ENCODE measurements at regions of chr13 and their contacts with region 1.

Region 1: DNA sequence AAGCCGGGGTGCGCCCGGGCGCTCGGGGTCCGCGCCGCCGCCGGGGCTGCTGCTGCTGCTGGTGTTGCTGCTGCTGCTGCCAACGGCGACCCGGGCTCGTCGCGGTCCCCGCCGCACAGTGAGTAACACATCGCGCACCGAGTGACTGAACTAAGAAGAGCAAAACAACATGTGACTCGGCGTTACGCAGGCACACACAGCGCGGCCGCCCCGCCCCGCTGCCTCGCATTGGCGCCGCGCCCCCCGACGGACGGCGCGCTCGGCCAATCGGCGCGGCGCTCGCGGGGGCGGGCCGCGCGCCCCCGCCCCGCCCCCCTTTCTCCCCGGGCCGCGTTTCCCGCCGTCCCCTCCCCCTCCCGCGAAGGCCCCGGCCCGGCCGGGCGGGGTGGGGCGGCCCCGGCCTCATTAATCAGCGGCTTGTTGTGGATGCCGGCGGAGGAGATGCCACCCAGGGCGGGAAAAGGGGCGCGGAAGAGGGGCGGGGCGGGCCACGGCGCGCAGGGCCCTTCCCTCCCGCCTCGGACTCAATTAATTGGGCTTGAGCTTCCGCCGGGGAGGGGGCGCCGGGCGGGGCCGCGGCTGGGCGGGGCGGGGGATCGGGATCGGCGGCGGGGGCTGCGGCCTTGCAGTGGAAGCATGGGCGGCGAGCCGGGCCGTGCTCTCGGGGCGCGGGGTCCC is at the start of gene IRS2:
- DNase-seq: peak; percentile 86 to 97 (median 96)
- ATAC-seq: peak; percentile 89
- H3K4me3 ChIP-seq: peak within 1 kb of the TSS; percentile 53
- H3K4me3 Mint-ChIP-seq: peak within 1 kb of the TSS; percentile 74 to 92 (median 84)
- H3K27ac ChIP-seq: peak within 1 kb of the TSS; percentile 80
- H3K27ac Mint-ChIP-seq: peak within 1 kb of the TSS; percentile 74 to 95 (median 89)
- H3K4me1 ChIP-seq: peaks cover 0 to 6% of the 10 kb centered on the region in 2 donors
- H3K4me1 Mint-ChIP-seq: peaks cover 15 to 33% (median 24%) of the 10 kb centered on the region in 7 donors
- H3K27me3 ChIP-seq: no peaks in the 10 kb centered on the region
- H3K27me3 Mint-ChIP-seq: peaks cover 0 to 35% (median 0%) of the 10 kb centered on the region in 5 donors
- total RNA-seq, gene IRS2: 3.8 to 94.9 (median 26.9) TPM

Region 2: GRCh38 chr13:108269601-108270328 is 1516.8 kb before region 1 on chr13 and contains the start of gene TNFSF13B:
- CTCF ChIA-PET with region 1: no interaction called
- POLR2A ChIA-PET with region 1: no interaction called
- intact Hi-C with region 1: loop called in 1 of 2 experiments (anchors 5 kb)
- DNase-seq: peak in 8 of 9 donors; percentile 17 to 62 (median 26)
- ATAC-seq: peak; percentile 74
- H3K4me3 ChIP-seq: peak within 1 kb of the TSS; percentile 65
- H3K4me3 Mint-ChIP-seq: peak within 1 kb of the TSS; percentile 83 to 98 (median 90)
- H3K27ac ChIP-seq: peak within 1 kb of the TSS; percentile 66
- H3K27ac Mint-ChIP-seq: peak within 1 kb of the TSS; percentile 83 to 97 (median 92)
- H3K4me1 ChIP-seq: peaks cover 0 to 7% of the 10 kb centered on the region in 2 donors
- H3K4me1 Mint-ChIP-seq: peaks cover 23 to 68% (median 52%) of the 10 kb centered on the region in 7 donors
- H3K27me3 ChIP-seq: no peaks in the 10 kb centered on the region
- H3K27me3 Mint-ChIP-seq: no peaks in the 10 kb centered on the region
- total RNA-seq, gene TNFSF13B: 3.0 to 26.8 (median 12.8) TPM

Region 3: DNA sequence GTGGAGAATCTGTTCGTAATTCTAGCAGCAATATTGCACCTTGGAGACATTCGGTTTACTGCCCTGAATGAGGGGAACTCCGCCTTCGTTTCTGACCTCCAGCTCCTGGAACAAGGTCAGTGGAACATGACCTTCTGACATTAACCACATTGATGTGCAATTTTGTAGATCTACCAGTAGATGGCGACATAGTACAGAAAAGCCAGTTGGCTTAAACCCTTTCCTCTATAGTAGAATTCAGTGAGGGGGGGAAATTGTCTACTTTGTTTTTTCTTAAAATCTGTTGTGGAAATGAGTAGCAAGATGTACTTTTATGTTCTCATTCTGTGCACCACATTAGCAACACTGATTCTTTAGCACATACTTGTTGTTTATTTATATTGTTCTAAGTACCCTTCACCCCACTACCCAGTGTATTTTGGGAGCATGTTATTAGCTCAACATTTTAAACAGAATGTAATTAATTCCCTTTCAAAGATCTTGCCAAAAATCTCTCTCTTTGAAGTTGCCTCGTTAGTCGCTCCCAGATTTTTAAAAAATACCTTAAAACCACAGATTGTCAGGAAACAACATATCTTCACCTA is 825.0 kb before region 1 on chr13:
- CTCF ChIA-PET with region 1: interaction called, 13 read pairs
- POLR2A ChIA-PET with region 1: no interaction called
- intact Hi-C with region 1: loop called (anchors 1 kb)
- DNase-seq: peak in 6 of 9 donors; percentile 11 to 62 (median 51)
- ATAC-seq: peak; percentile 86
- H3K4me3 ChIP-seq: no peak overlapping the region
- H3K4me3 Mint-ChIP-seq: no peak overlapping the region
- H3K27ac ChIP-seq: no peak overlapping the region
- H3K27ac Mint-ChIP-seq: no peak overlapping the region
- H3K4me1 ChIP-seq: no peaks in the 10 kb centered on the region
- H3K4me1 Mint-ChIP-seq: peaks cover 0 to 2% (median 0%) of the 10 kb centered on the region in 7 donors
- H3K27me3 ChIP-seq: no peaks in the 10 kb centered on the region
- H3K27me3 Mint-ChIP-seq: peaks cover 2 to 4% (median 3%) of the 10 kb centered on the region in 5 donors

Region 4: DNA sequence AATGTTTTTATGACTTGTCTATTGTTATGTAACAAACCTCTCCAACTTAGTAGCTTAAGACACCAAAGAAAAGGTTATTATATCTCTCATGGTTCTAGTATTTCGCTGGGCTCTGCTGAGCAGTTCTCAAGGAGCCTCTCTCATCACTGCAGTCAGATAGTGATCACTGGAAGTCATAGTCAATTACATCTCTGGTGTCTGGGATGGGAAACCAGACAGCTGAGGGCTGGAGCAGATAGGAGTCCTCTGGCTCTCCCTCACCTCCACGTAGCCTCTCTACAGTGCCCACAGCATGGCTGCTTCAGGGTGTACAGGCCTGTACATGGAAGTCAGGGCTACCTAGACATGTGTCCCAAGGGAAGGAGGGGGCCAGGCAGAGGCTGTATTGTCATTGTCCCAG is 649.7 kb before region 1 on chr13:
- CTCF ChIA-PET with region 1: no interaction called
- POLR2A ChIA-PET with region 1: no interaction called
- intact Hi-C with region 1: no loop called
- DNase-seq: no peak
- ATAC-seq: no peak
- H3K4me3 ChIP-seq: no peak overlapping the region
- H3K4me3 Mint-ChIP-seq: no peak overlapping the region
- H3K27ac ChIP-seq: no peak overlapping the region
- H3K27ac Mint-ChIP-seq: no peak overlapping the region
- H3K4me1 ChIP-seq: no peaks in the 10 kb centered on the region
- H3K4me1 Mint-ChIP-seq: peaks cover 0 to 2% (median 0%) of the 10 kb centered on the region in 7 donors
- H3K27me3 ChIP-seq: no peaks in the 10 kb centered on the region
- H3K27me3 Mint-ChIP-seq: peaks cover 12 to 30% (median 24%) of the 10 kb centered on the region in 5 donors

Region 5: GRCh38 chr13:109569958-109570711 is 216.5 kb before region 1 on chr13:
- CTCF ChIA-PET with region 1: no interaction called
- POLR2A ChIA-PET with region 1: no interaction called
- intact Hi-C with region 1: loop called in 1 of 2 experiments (anchors 2 kb)
- DNase-seq: peak in 8 of 9 donors; percentile 26 to 66 (median 54)
- ATAC-seq: peak; percentile 77
- H3K4me3 ChIP-seq: peak overlapping the region; percentile 21
- H3K4me3 Mint-ChIP-seq: peak overlapping the region in 9 of 10 donors; percentile 25 to 76 (median 56)
- H3K27ac ChIP-seq: peak overlapping the region; percentile 17
- H3K27ac Mint-ChIP-seq: peak overlapping the region; percentile 47 to 92 (median 82)
- H3K4me1 ChIP-seq: peaks cover 0 to 7% of the 10 kb centered on the region in 2 donors
- H3K4me1 Mint-ChIP-seq: peaks cover 8 to 38% (median 17%) of the 10 kb centered on the region in 7 donors
- H3K27me3 ChIP-seq: no peaks in the 10 kb centered on the region
- H3K27me3 Mint-ChIP-seq: peaks cover 0 to 22% (median 0%) of the 10 kb centered on the region in 5 donors

Region 6: DNA sequence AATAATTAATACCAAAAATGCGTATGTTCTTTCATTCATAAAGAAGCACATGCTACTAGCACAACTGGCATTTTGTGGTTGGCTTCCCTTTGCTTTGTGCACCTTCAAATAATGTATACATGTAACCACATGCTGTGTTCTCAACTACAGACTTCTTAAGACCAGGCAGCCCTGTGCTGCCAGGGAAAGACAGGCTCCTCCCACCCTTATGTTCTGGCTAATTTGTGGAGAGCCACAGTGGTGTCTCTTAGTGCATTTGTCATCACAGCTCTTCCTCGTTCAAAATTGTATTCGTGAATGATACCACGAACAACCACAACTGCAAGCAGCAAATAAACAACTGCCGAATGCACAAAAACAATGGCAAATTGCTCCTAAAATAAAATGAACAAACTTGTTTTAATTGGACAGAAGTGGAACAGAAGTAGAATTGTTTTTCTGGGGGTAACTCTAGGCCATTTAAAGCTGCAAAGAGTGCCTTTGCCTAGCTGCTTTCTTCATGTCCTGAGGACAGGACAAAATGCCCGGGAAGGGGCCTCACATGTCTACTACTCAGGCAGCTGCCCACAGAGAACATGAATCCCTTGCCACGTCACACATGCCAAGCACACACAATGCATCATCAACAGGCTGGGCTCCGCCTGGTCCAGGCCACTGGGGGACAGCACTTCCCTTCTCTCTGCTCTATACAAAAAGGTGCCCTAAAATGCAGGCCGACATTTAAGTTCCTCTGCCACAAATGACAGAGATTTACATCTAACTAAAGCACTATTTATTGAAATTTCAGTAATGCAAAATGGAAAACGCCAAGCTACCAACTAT is 21.9 kb before region 1 on chr13:
- CTCF ChIA-PET with region 1: interaction called, 3 read pairs
- POLR2A ChIA-PET with region 1: no interaction called
- intact Hi-C with region 1: loop called in 1 of 2 experiments (anchors 1 kb)
- DNase-seq: peak in 3 of 9 donors; percentile 27 to 39 (median 33)
- ATAC-seq: peak; percentile 71
- H3K4me3 ChIP-seq: no peak overlapping the region
- H3K4me3 Mint-ChIP-seq: peak overlapping the region in 6 of 10 donors; percentile 1 to 62 (median 24)
- H3K27ac ChIP-seq: no peak overlapping the region
- H3K27ac Mint-ChIP-seq: peak overlapping the region in 5 of 9 donors; percentile 23 to 70 (median 43)
- H3K4me1 ChIP-seq: peaks cover 0 to 16% of the 10 kb centered on the region in 2 donors
- H3K4me1 Mint-ChIP-seq: peaks cover 8 to 81% (median 62%) of the 10 kb centered on the region in 7 donors
- H3K27me3 ChIP-seq: no peaks in the 10 kb centered on the region
- H3K27me3 Mint-ChIP-seq: no peaks in the 10 kb centered on the region

Region 7: GRCh38 chr13:110070511-110071120 is 284.0 kb after region 1 on chr13:
- CTCF ChIA-PET with region 1: no interaction called
- POLR2A ChIA-PET with region 1: no interaction called
- intact Hi-C with region 1: no loop called
- DNase-seq: no peak
- ATAC-seq: no peak
- H3K4me3 ChIP-seq: no peak overlapping the region
- H3K4me3 Mint-ChIP-seq: no peak overlapping the region
- H3K27ac ChIP-seq: no peak overlapping the region
- H3K27ac Mint-ChIP-seq: no peak overlapping the region
- H3K4me1 ChIP-seq: no peaks in the 10 kb centered on the region
- H3K4me1 Mint-ChIP-seq: no peaks in the 10 kb centered on the region
- H3K27me3 ChIP-seq: no peaks in the 10 kb centered on the region
- H3K27me3 Mint-ChIP-seq: peaks cover 0 to 15% (median 3%) of the 10 kb centered on the region in 5 donors

Region 8: DNA sequence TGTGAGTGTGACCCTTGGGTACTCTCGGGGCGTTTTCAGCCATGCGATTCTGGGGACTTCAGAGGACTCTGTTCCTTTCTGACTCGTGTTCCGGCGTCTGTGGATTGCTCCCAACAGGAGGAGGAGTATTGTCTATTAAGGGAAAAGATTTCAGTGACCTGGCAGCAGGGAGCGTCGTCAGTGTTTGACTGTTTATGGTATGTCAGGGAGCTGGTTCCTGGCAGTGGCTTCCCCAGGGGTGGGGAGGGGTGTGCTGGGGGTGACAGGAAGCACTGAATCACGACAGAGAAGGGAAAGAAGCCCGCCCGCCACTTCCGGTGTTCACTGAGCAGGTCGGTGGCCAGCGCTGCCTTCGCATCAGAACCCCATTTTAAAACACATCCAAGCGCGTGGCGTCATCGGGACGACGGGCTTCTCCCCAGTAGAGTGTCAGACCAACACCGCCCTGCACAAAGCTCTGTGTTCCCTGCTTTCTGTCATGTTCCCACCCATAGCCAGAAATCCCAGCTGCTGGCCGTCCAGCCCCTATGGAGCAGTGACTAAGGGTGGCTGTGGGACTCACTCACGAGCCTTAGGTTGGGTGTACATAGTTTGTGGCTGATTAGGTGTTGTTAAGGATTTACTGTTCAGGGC is 554.3 kb after region 1 on chr13:
- CTCF ChIA-PET with region 1: no interaction called
- POLR2A ChIA-PET with region 1: no interaction called
- intact Hi-C with region 1: loop called in 1 of 2 experiments (anchors 5 kb)
- DNase-seq: peak in 8 of 9 donors; percentile 38 to 69 (median 52)
- ATAC-seq: peak; percentile 70
- H3K4me3 ChIP-seq: peak overlapping the region; percentile 15
- H3K4me3 Mint-ChIP-seq: peak overlapping the region; percentile 72 to 86 (median 78)
- H3K27ac ChIP-seq: peak overlapping the region; percentile 46
- H3K27ac Mint-ChIP-seq: peak overlapping the region; percentile 71 to 95 (median 87)
- H3K4me1 ChIP-seq: peaks cover 0 to 17% of the 10 kb centered on the region in 2 donors
- H3K4me1 Mint-ChIP-seq: peaks cover 19 to 39% (median 33%) of the 10 kb centered on the region in 7 donors
- H3K27me3 ChIP-seq: no peaks in the 10 kb centered on the region
- H3K27me3 Mint-ChIP-seq: peaks cover 0 to 39% (median 5%) of the 10 kb centered on the region in 5 donors